Activated CD4-positive, alpha-beta T cell treated with anti-CD3 and anti-CD28 coated beads for 36 hours (primary cell): ENCODE measurements at regions of chr2 and their contacts with region 1.

Region 1: DNA sequence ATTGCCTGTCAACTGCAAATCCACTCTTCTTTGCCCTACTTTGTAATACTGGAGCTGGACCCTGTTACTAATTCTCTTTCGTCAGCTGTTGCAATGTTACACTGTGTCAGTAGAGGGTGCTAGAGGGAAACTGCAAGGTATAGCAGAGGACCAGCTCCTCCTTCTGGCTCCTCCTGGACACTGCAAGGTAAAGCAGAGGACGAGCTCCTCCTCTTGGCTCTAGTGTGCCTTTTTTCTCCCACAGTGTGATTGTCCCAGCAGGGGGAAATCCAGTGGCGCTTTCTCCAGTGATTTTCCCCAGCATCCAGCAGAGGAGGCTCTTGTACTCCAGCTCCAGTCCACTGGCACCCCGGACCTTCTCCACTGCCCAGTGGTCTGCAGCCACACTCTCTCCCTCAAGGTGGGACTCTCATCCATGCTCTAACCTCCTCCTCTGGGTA is 95.6 kb downstream of the CAPN13 start:
- DNase-seq: peak; percentile 91
- ATAC-seq: peak; percentile 83
- H3K4me3 Mint-ChIP-seq: no peak overlapping the region
- H3K27ac Mint-ChIP-seq: no peak overlapping the region
- H3K4me1 Mint-ChIP-seq: peaks cover 11% of the 10 kb centered on the region
- H3K27me3 Mint-ChIP-seq: no peaks in the 10 kb centered on the region

Region 2: DNA sequence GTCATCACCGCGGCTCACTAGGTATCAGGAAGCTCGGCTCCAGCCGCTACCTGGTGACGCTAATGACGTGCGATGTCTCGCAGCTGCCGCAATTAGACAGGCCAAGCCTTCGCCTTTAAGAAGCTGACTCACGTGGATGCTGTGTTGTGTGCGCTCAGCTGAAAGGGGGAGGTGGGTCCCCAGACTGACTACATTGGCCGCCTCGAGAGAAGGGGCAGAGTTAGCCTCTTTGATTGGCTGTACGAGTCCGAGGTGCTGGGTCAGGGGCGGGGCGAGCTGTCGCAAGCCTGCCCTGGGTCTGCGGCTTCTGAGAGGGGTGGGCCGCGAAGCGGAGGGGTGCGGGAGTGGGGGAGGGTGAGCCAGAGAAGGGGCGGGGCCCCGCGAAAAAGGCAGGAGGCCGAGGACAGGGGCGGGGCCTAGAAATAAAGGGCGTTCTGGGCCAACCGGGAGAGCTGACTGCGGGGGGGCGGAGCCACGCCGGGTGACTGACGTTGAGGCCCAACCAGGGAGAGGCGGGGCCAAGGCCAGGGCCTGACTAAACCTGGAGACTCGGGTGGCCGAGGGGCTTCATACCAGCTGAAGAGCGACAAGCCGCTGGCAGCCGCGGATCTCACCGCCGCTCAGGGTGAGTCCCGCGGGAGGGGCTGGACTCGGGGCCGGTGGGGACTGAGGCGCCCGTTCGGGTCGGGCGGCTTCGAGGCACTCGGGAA is 565.1 kb before region 1 on chr2 and contains the start of gene YPEL5:
- CTCF ChIA-PET with region 1: interaction called, 83 read pairs
- POLR2A ChIA-PET with region 1: no interaction called
- intact Hi-C with region 1: no loop called
- DNase-seq: peak; percentile 99
- ATAC-seq: peak; percentile 94
- H3K4me3 Mint-ChIP-seq: peak within 1 kb of the TSS; percentile 81
- H3K27ac Mint-ChIP-seq: peak within 1 kb of the TSS; percentile 96
- H3K4me1 Mint-ChIP-seq: peaks cover 55% of the 10 kb centered on the region
- H3K27me3 Mint-ChIP-seq: no peaks in the 10 kb centered on the region
- total RNA-seq, gene YPEL5: 27.2 to 35.8 TPM

Region 3: DNA sequence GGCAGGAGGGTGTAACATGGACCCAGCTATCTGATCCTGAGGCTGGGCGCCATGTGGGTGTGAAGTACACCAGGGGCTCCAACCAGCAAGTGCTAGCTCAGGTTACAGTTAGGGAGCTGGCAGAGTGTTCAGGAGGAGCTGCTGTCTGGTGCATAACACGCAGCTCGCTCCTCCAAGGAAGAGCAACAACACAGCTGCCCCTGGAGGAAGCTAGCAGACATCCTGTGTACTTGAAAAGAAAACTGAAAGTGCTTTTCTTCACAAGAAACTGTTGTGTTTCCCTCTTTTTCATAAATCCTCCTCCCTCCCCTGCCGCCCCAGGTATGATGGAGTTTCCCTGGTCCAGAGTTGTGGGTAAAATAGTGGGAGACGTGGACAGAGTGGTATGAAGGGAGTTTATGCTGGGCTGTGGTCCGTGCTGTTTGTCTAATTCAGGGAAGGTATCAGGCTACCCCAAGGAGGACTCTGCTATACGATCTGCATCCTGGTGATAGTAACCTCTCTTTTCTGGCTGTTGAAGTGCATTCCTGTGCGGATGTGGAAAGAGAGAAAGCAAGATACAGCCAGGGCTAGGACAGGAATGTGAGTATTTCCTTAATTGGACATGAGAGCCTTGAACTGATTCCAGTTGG is 486.4 kb before region 1 on chr2:
- CTCF ChIA-PET with region 1: interaction called, 22 read pairs
- POLR2A ChIA-PET with region 1: interaction called, 3 read pairs
- intact Hi-C with region 1: no loop called
- DNase-seq: peak; percentile 58
- ATAC-seq: peak; percentile 64
- H3K4me3 Mint-ChIP-seq: peak overlapping the region; percentile 77
- H3K27ac Mint-ChIP-seq: peak overlapping the region; percentile 93
- H3K4me1 Mint-ChIP-seq: peaks cover 74% of the 10 kb centered on the region
- H3K27me3 Mint-ChIP-seq: peaks cover 9% of the 10 kb centered on the region

Region 4: GRCh38 chr2:30686000-30686399 is 25.7 kb before region 1 on chr2:
- CTCF ChIA-PET with region 1: interaction called, 45 read pairs
- POLR2A ChIA-PET with region 1: no interaction called
- intact Hi-C with region 1: no loop called
- DNase-seq: peak; percentile 36
- ATAC-seq: peak; percentile 49
- H3K4me3 Mint-ChIP-seq: no peak overlapping the region
- H3K27ac Mint-ChIP-seq: no peak overlapping the region
- H3K4me1 Mint-ChIP-seq: no peaks in the 10 kb centered on the region
- H3K27me3 Mint-ChIP-seq: no peaks in the 10 kb centered on the region

Region 5: DNA sequence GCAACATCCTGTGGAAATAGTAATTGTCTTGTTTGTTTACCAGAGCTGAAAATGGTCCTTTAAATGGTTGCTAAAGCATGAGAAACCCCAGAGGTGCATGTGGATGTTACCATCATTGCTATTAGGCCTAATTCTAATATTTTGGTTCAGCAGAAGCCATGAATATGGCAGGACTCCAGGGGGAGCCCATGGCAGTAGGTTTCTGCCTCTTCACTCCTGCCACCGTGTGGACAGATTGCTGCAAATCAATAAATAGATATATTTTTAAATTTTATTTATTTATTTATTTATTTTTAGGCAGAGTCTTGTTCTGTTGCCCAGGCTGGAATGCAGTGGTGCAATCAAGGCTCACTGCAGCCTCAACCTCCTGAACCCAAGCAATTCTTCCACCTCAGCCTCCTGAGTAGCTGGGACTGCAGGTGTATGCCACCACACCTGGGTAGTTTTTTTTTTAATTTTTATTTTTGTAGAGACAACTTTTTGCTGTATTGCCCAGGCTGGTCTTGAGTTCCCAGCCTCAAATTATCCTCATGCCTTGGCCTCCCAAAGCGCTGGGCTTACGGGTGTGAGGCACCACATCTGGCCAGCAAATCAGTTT is 150.5 kb after region 1 on chr2:
- CTCF ChIA-PET with region 1: interaction called, 76 read pairs
- POLR2A ChIA-PET with region 1: no interaction called
- intact Hi-C with region 1: loop called (anchors 1 kb)
- DNase-seq: peak; percentile 69
- ATAC-seq: no peak
- H3K4me3 Mint-ChIP-seq: no peak overlapping the region
- H3K27ac Mint-ChIP-seq: no peak overlapping the region
- H3K4me1 Mint-ChIP-seq: peaks cover 8% of the 10 kb centered on the region
- H3K27me3 Mint-ChIP-seq: peaks cover 8% of the 10 kb centered on the region

Region 6: GRCh38 chr2:31333527-31334183 is 622.0 kb after region 1 on chr2:
- CTCF ChIA-PET with region 1: interaction called, 68 read pairs
- POLR2A ChIA-PET with region 1: no interaction called
- intact Hi-C with region 1: loop called (anchors 1 kb)
- DNase-seq: peak; percentile 87
- ATAC-seq: peak; percentile 93
- H3K4me3 Mint-ChIP-seq: no peak overlapping the region
- H3K27ac Mint-ChIP-seq: no peak overlapping the region
- H3K4me1 Mint-ChIP-seq: no peaks in the 10 kb centered on the region
- H3K27me3 Mint-ChIP-seq: no peaks in the 10 kb centered on the region